Testis (tissue), 5 donors: ENCODE measurements at regions of chr2 and their contacts with region 1.

Region 1: DNA sequence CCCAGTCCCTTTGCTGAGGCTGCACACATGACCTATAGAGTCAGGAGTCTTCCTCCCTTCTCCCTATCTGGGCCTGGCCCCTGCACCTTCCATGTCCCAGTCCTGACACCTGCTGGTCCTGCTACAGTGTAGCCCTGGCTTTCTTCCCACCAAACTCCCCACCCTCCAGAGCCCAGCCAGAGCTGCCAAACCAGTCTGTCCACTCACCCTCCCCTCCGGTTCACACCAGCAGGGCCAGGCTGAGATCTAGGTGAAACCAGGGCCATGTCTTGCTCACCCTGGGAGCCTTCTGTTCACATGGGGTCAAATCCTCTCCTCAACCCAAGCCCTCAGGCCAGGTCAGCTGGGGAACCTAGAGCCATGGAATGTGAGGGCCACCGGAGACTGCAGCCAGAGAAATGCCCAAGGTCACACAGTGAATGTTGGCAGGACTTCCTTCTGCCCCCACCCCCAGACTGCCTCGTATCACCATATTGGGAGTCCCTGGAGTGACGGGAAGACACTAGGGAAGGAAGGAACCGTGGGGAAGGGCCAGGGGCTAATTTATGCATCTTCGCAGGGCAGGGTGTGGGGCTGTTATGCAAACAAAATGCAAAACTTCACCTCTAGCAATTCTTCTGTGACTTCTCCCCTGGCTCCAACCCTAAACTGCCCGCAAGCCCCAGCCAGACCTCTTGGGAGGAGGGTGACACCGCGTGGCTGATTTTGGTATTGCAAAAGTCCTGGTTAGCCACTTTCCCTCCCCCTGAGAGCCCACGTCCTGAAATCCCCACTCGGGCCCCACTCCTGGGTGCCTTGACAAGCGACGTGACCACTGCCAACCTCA is 14.6 kb downstream of the TNS1 start:
- DNase-seq: peak; percentile 93
- H3K4me3 ChIP-seq: no peak overlapping the region
- H3K27ac ChIP-seq: peak overlapping the region in 1 of 2 donors; percentile 52
- H3K4me1 ChIP-seq: peaks cover 16% of the 10 kb centered on the region
- H3K27me3 ChIP-seq: no peaks in the 10 kb centered on the region
- CTCF ChIP-seq: peak; percentile 89 to 91 (median 90)
- POLR2A ChIP-seq: no peak

Region 2: GRCh38 chr2:217790195-217790594 is 198.0 kb before region 1 on chr2:
- intact Hi-C with region 1: loop called (anchors 5 kb)
- DNase-seq: no peak
- H3K4me3 ChIP-seq: no peak overlapping the region
- H3K27ac ChIP-seq: peak overlapping the region in 1 of 2 donors; percentile 54
- H3K4me1 ChIP-seq: peaks cover 9% of the 10 kb centered on the region
- H3K27me3 ChIP-seq: no peaks in the 10 kb centered on the region
- CTCF ChIP-seq: no peak
- POLR2A ChIP-seq: no peak

Region 3: DNA sequence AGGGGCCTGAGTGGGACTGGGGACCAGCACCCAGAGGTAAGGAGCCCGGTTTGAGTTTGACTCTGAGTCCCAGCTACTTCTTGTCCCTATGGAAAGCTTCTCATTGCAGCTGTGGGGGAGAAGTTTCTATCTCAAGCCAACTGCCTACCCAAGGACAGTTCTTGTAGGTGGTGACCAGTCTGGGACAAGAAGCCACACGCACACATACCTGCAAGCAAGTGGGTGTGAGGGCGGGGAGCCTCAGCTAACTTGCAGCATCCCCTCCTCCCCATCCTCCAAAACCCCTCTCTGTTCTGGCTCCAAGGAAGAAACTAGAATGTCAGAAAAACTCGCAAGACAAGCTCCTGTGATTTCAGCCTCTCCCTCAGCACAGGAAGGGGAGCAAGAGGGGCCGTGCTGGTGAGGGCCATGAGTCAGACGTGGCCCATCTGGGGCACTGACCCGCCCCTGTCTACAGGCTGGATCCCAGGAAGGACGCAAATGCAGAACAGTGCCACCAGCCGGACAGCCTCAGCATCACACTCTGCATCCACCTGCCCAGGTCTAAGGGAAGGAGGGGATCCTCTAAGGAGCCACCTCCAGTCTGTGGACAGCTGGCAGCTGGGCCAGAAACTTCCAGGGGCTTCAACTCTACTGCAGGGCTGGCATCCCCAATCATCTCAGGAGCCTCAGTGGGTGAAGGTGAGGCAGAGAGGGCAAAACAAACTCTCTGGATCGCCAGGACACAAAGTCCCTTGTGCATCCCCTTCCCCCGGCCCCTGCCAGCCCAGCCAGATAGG is 88.8 kb before region 1 on chr2:
- intact Hi-C with region 1: loop called (anchors 10 kb)
- DNase-seq: peak; percentile 62
- H3K4me3 ChIP-seq: no peak overlapping the region
- H3K27ac ChIP-seq: peak overlapping the region; percentile 2 to 88
- H3K4me1 ChIP-seq: peaks cover 71% of the 10 kb centered on the region
- H3K27me3 ChIP-seq: no peaks in the 10 kb centered on the region
- CTCF ChIP-seq: peak; percentile 27 to 64 (median 59)
- POLR2A ChIP-seq: no peak

Region 4: DNA sequence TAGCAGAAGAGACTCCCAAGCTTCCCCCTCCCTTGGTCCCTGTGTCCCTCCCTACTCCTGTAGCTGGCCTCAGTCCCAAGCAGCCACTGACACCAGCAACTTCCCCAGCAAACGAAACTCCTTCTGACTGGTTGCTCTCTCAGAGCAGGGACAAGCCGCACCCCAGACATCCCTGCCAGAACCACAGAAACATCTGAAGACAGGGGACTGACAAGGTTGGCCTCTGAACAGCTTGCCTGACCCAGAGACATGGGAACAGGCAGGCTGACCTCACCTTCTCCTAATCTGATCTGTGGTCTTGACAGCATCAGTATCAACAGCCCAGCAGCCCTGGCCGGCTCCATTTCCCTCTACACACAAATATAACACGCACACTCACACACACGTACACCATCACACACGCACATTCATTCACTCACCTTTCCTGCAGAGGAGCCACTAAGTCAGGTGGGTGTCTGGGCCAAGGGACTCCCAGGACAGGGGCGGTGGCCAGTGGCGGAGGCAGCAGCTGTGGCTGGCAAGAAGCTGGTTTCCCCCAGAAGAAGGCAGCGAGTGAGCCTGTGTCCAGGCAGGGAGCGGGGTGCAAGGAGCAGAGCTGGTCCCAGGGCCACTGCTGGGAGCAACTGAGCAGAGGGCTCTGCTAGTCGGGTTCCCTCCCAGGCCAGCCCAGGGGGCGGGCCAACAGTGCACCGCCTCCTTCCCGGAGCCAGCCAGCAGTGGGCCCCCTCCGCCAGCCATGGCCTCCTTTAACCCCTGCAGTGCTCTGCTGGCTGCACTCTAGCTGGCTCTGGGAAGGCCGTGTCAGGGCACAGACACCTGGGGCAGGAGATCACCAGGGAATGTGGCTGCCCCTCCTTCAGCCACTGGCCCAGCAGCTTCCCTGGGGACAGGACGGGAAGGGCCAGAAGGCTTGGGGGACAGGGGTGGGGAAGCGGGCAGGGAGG is 44.5 kb before region 1 on chr2:
- intact Hi-C with region 1: no loop called
- DNase-seq: peak; percentile 78
- H3K4me3 ChIP-seq: peak overlapping the region; percentile 55 to 77
- H3K27ac ChIP-seq: peak overlapping the region; percentile 70 to 81
- H3K4me1 ChIP-seq: peaks cover 14% of the 10 kb centered on the region
- H3K27me3 ChIP-seq: no peaks in the 10 kb centered on the region
- CTCF ChIP-seq: no peak
- POLR2A ChIP-seq: no peak